Right ventricle myocardium inferior (tissue), 1 donor: ENCODE measurements at regions of chr10 and their contacts with region 1.

Region 1: GRCh38 chr10:104121520-104122224 is at the start of gene SFR1:
- DNase-seq: peak; percentile 99
- ATAC-seq: peak; percentile 97
- total RNA-seq, gene SFR1: 5.7 TPM

Region 2: DNA sequence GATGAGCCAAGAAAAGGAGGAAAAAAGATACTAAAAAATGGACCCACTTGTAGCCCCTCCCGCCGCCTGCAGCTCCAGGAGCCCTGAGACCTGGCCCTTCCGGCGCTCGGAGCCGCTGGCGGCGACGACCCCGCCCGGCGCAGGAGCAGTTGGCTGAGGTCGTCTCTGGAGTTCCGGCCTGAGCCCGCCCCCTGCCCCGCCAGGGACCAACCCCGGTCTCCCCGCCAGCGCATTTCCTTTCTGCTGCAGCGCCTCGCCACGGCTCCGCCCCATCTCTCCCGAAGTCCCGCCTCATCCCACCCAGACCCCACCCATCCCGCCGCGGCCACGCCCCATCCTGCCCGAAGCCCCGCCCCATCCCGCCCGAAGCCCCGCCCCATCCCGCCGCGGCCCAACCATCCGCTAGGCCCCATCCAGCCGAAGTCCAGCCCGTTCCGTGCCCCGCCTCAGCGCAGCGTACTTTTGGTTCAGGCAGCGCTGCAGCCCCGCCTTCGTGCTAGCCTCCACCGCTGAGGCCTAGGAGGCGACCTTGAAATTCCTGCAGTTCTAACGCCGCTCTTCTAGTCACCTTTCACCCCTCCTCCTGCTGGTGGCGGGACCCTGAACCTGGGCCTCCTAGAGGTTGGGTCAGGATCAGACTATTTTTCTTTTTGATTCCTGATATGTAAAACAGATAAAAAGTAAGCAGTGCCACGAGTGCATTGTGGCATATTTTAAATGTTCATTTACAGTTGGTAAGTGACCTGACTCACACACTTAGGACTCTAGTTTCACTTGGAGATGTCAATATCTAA is 203.4 kb before region 1 on chr10 and contains the start of gene STN1:
- intact Hi-C with region 1: loop called (anchors 5 kb)
- DNase-seq: peak; percentile 99
- ATAC-seq: peak; percentile 98
- total RNA-seq, gene STN1: 30.1 TPM

Region 3: GRCh38 chr10:104028146-104028545 is 93.5 kb before region 1 on chr10:
- intact Hi-C with region 1: loop called (anchors 5 kb)
- DNase-seq: no peak
- ATAC-seq: peak; percentile 90

Region 4: DNA sequence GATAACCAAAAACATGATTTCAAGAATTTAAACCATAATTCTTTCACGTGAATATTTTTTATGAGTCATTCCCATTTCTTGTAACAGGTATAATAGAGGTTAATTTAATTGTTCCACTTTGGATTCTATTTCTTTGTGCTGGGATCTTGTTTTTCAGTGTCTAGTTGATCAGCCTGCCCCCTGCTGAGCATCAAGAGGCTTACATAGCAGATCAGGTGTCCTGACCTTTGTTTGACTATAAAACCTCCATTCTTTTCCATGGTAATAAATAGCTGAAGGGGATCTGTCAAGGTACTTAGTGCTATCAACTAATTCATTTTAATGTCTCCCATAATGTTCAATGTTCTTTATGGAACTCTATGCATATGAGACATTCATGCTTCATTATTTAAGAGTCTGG is 40.9 kb before region 1 on chr10:
- intact Hi-C with region 1: loop called (anchors 5 kb)
- DNase-seq: no peak
- ATAC-seq: no peak

Region 5: GRCh38 chr10:104328896-104329710 is 207.4 kb after region 1 on chr10:
- intact Hi-C with region 1: no loop called
- DNase-seq: no peak
- ATAC-seq: no peak